Activated B cell treated with CpG ODN at 0.5 μM for 24 hours (primary cell): ENCODE measurements at regions of chr1 and their contacts with region 1.

Region 1: GRCh38 chr1:100459358-100460114 is 78.4 kb upstream of the GPR88 start:
- DNase-seq: peak; percentile 39
- ATAC-seq: peak; percentile 86
- H3K4me3 Mint-ChIP-seq: no peak overlapping the region
- H3K27ac Mint-ChIP-seq: no peak overlapping the region
- H3K4me1 Mint-ChIP-seq: peaks cover 25% of the 10 kb centered on the region
- H3K27me3 Mint-ChIP-seq: no peaks in the 10 kb centered on the region
- CTCF ChIP-seq: no peak

Region 2: GRCh38 chr1:99163671-99164070 is 1295.9 kb before region 1 on chr1:
- CTCF ChIA-PET with region 1: no interaction called
- POLR2A ChIA-PET with region 1: no interaction called
- intact Hi-C with region 1: no loop called
- DNase-seq: no peak
- ATAC-seq: no peak
- H3K4me3 Mint-ChIP-seq: no peak overlapping the region
- H3K27ac Mint-ChIP-seq: no peak overlapping the region
- H3K4me1 Mint-ChIP-seq: no peaks in the 10 kb centered on the region
- H3K27me3 Mint-ChIP-seq: no peaks in the 10 kb centered on the region
- CTCF ChIP-seq: no peak

Region 3: GRCh38 chr1:99180343-99180808 is 1279.2 kb before region 1 on chr1:
- CTCF ChIA-PET with region 1: no interaction called
- POLR2A ChIA-PET with region 1: no interaction called
- intact Hi-C with region 1: loop called (anchors 2 kb)
- DNase-seq: no peak
- ATAC-seq: peak; percentile 81
- H3K4me3 Mint-ChIP-seq: no peak overlapping the region
- H3K27ac Mint-ChIP-seq: no peak overlapping the region
- H3K4me1 Mint-ChIP-seq: no peaks in the 10 kb centered on the region
- H3K27me3 Mint-ChIP-seq: no peaks in the 10 kb centered on the region
- CTCF ChIP-seq: no peak

Region 4: DNA sequence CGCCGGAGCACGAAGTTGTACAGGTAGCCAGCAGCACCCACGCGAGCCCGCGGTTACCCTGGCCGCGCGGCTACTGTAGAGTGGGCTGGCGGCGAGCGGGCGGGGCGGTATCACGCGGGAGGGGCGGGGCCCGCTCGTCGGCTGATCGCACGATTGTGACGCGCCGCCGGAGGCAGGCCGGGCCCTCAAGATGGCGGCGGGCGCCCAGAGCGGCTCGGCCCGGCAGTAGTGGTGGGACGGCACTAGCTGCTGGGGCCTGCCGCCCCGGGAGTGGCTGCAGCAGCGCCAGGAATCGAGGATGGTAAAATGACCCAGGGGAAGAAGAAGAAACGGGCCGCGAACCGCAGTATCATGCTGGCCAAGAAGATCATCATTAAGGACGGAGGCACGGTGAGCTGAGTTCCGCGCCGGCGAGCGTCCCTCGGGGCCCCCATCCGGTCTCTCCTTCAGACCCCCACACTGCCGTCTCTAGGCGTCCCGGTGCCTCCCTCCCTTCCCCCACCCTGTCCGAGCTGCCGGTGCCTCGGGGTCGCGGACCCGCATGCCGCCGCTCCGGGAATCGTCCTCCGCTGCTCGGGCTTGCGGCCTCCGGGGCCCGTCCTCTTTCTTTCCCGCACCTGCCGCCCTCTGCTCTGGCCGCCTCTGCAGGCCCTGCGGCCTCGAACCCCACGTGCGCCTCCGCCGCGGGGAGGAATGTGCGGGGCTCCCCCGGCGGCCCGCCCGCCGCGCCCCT is 421.4 kb before region 1 on chr1:
- CTCF ChIA-PET with region 1: no interaction called
- POLR2A ChIA-PET with region 1: no interaction called
- intact Hi-C with region 1: loop called (anchors 2 kb)
- DNase-seq: peak; percentile 85
- ATAC-seq: peak; percentile 92
- H3K4me3 Mint-ChIP-seq: peak overlapping the region; percentile 98
- H3K27ac Mint-ChIP-seq: peak overlapping the region; percentile 98
- H3K4me1 Mint-ChIP-seq: peaks cover 56% of the 10 kb centered on the region
- H3K27me3 Mint-ChIP-seq: no peaks in the 10 kb centered on the region
- CTCF ChIP-seq: no peak

Region 5: GRCh38 chr1:100152271-100152670 is 307.3 kb before region 1 on chr1:
- CTCF ChIA-PET with region 1: no interaction called
- POLR2A ChIA-PET with region 1: no interaction called
- intact Hi-C with region 1: loop called (anchors 5 kb)
- DNase-seq: no peak
- ATAC-seq: peak; percentile 47
- H3K4me3 Mint-ChIP-seq: no peak overlapping the region
- H3K27ac Mint-ChIP-seq: peak overlapping the region; percentile 50
- H3K4me1 Mint-ChIP-seq: peaks cover 13% of the 10 kb centered on the region
- H3K27me3 Mint-ChIP-seq: no peaks in the 10 kb centered on the region
- CTCF ChIP-seq: no peak

Region 6: DNA sequence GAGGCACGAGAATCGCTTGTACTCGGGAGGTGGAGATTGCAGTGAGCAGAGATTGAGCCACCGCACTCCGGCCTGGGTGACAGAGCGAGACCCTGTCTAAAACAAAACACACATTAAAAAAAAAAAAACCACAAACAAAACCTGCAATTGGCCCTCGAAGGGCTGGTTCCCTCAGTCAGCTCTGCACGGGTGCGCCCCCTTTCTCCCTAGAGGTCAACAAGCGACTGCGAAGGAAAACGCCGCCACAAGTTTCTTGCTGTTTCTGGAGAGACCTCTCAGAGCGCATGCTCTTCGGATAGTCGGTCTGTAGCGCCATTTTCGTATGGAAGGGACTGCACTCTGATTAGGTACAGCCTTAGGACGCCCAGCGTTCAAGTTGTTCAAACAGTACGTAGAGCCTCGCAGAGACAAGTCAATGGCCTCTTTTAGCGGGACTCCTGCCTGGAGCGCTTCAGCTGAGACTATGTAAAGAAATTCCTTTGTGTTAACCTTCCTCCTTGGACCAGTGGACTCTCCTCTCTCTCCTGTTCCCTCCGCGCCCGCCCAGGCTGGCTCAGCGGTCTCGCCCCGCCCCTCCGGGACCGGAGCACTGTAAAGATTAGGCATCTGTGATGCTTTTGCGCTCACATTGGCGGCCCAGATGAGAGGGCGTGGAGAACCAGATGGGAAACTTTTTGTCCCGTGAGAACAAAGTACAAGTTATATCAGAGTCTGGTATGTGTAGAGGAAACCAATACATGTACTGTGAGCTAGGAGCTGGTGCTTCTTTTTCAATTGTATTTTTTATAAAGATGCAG is 108.2 kb before region 1 on chr1:
- CTCF ChIA-PET with region 1: interaction called, 5 read pairs
- POLR2A ChIA-PET with region 1: interaction called, 4 read pairs
- intact Hi-C with region 1: loop called (anchors 5 kb)
- DNase-seq: peak; percentile 78
- ATAC-seq: peak; percentile 66
- H3K4me3 Mint-ChIP-seq: peak overlapping the region; percentile 99
- H3K27ac Mint-ChIP-seq: peak overlapping the region; percentile 96
- H3K4me1 Mint-ChIP-seq: peaks cover 35% of the 10 kb centered on the region
- H3K27me3 Mint-ChIP-seq: no peaks in the 10 kb centered on the region
- CTCF ChIP-seq: no peak

Region 7: GRCh38 chr1:100469578-100469977 is 10.0 kb after region 1 on chr1:
- CTCF ChIA-PET with region 1: interaction called, 21 read pairs
- POLR2A ChIA-PET with region 1: no interaction called
- intact Hi-C with region 1: no loop called
- DNase-seq: no peak
- ATAC-seq: no peak
- H3K4me3 Mint-ChIP-seq: no peak overlapping the region
- H3K27ac Mint-ChIP-seq: no peak overlapping the region
- H3K4me1 Mint-ChIP-seq: no peaks in the 10 kb centered on the region
- H3K27me3 Mint-ChIP-seq: no peaks in the 10 kb centered on the region
- CTCF ChIP-seq: no peak

Region 8: DNA sequence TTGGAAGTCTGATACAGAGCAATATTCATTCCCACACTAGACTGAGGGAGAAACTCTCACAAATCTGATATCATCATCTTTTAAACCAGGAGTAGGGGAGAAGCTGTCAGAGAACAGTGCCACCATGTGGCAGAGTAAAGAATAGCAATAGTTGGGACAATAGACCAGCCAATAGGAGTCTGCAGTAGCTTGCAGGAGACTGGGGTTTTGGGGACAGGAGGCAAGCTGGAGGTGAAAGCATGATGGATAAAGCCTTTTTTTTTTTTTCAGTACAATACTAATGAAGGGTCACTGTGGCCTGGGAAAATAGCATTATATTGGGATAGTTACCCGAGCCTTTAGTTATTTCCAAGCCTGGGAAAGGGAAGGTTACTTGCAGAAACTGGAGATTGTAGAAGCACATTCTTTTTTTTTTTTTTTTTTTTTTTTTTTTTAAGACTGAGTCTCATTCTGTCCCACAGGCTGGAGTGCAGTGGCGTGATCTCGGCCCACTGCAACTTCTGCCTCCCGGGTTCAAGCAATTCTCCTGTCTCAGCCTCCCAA is 898.0 kb after region 1 on chr1:
- CTCF ChIA-PET with region 1: no interaction called
- POLR2A ChIA-PET with region 1: no interaction called
- intact Hi-C with region 1: loop called (anchors 5 kb)
- DNase-seq: no peak
- ATAC-seq: peak; percentile 99
- H3K4me3 Mint-ChIP-seq: no peak overlapping the region
- H3K27ac Mint-ChIP-seq: no peak overlapping the region
- H3K4me1 Mint-ChIP-seq: peaks cover 9% of the 10 kb centered on the region
- H3K27me3 Mint-ChIP-seq: no peaks in the 10 kb centered on the region
- CTCF ChIP-seq: no peak